ENCODE measurements at regions of chr10 and their contacts with region 1.

Region 1: GRCh38 chr10:73940634-73941221 is 29.8 kb downstream of the PLAU start:
- DNase-seq: peak; percentile 89
- ATAC-seq: peak; percentile 98
- H3K4me3 Mint-ChIP-seq: peak overlapping the region; percentile 33
- H3K27ac Mint-ChIP-seq: no peak overlapping the region
- H3K4me1 Mint-ChIP-seq: peaks cover 10% of the 10 kb centered on the region
- H3K27me3 Mint-ChIP-seq: peaks cover 7% of the 10 kb centered on the region
- CTCF ChIP-seq: peak; percentile 53

Region 2: DNA sequence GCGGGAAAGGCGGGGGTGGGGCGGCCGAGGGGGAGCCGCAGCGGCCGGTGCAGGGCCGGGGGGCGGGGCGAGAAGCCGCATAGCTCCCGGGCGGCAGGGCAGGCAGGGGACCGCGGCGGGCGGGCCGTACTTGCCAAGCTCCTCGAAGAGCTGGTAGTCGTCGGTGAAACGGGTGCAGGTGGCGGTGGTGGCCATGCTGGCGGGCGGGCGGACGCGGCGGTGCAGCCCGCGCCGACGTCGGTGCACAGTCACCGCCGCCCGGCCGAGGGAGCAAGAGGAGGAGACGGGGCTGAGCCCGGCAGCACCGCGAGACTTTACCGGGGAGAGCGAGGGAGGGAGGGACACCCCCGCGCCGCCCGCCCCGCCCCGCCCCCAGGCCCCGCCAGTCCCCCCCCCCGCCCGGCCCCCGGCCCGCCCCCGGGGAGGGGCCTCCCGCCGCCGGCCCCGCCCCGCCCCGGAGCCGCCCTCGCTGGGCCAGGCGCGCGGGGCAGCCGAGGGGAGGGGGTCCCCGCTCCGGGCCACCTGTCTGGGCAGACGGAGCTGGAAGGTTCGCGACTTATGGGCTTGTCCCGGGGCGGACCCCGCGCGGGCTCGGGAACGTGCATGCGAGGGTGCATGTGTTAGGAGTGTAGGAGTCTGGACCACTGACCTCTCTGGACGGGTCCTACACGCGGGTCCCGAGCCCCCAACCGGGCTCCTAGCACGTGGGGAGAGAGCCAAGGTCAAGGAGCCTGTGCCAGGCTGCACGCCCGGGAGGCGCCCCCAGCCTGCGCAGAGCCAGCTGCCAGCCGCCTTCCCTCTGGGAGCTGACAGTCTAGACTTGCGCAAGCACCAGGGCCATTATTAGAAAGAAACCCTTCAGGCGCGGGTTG is 66.2 kb before region 1 on chr10 and contains the start of gene CAMK2G:
- CTCF ChIA-PET with region 1: interaction called, 24 read pairs
- POLR2A ChIA-PET with region 1: no interaction called
- DNase-seq: peak; percentile 77
- ATAC-seq: peak; percentile 84
- H3K4me3 Mint-ChIP-seq: peak within 1 kb of the TSS; percentile 74
- H3K27ac Mint-ChIP-seq: no peak within 1 kb of the TSS
- H3K4me1 Mint-ChIP-seq: peaks cover 32% of the 10 kb centered on the region
- H3K27me3 Mint-ChIP-seq: no peaks in the 10 kb centered on the region; the same call in 1 of the 2 replicates
- CTCF ChIP-seq: no peak
- total RNA-seq, gene CAMK2G: 34.9 to 39.9 TPM (median 34.9 TPM) in 3 replicates

Region 3: DNA sequence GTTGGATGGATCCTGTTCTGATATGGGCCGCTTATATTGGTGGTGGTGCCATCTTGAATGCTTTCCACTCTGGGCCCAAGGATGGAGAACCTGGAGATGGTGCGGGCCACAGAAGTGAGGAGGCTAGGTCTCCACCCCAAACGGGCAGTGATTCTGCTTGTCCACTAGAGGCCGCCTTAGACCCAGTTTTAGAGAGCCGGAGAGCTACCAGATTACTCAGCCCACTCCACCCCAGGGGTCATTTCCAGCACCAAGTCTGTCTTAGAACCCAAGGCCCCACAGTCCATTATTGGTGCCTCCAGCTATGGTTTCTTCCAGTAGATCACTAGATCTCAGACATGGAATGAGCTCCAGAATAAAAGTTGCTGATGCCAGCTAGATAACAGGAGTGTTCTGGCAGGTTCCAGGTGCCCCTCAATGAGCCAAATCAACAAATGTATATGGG is 54.6 kb before region 1 on chr10:
- CTCF ChIA-PET with region 1: interaction called, 155 read pairs
- POLR2A ChIA-PET with region 1: interaction called, 7 read pairs
- DNase-seq: peak; percentile 78
- ATAC-seq: peak; percentile 95
- H3K4me3 Mint-ChIP-seq: no peak overlapping the region
- H3K27ac Mint-ChIP-seq: no peak overlapping the region
- H3K4me1 Mint-ChIP-seq: peaks cover 19% of the 10 kb centered on the region
- H3K27me3 Mint-ChIP-seq: no peaks in the 10 kb centered on the region
- CTCF ChIP-seq: peak; percentile 79

Region 4: GRCh38 chr10:73917566-73918305 is 23.0 kb before region 1 on chr10:
- CTCF ChIA-PET with region 1: interaction called, 10 read pairs
- POLR2A ChIA-PET with region 1: no interaction called
- DNase-seq: no peak
- ATAC-seq: no peak
- H3K4me3 Mint-ChIP-seq: no peak overlapping the region
- H3K27ac Mint-ChIP-seq: no peak overlapping the region
- H3K4me1 Mint-ChIP-seq: peaks cover 22% of the 10 kb centered on the region
- H3K27me3 Mint-ChIP-seq: peaks cover 15% of the 10 kb centered on the region
- CTCF ChIP-seq: no peak

Region 5: DNA sequence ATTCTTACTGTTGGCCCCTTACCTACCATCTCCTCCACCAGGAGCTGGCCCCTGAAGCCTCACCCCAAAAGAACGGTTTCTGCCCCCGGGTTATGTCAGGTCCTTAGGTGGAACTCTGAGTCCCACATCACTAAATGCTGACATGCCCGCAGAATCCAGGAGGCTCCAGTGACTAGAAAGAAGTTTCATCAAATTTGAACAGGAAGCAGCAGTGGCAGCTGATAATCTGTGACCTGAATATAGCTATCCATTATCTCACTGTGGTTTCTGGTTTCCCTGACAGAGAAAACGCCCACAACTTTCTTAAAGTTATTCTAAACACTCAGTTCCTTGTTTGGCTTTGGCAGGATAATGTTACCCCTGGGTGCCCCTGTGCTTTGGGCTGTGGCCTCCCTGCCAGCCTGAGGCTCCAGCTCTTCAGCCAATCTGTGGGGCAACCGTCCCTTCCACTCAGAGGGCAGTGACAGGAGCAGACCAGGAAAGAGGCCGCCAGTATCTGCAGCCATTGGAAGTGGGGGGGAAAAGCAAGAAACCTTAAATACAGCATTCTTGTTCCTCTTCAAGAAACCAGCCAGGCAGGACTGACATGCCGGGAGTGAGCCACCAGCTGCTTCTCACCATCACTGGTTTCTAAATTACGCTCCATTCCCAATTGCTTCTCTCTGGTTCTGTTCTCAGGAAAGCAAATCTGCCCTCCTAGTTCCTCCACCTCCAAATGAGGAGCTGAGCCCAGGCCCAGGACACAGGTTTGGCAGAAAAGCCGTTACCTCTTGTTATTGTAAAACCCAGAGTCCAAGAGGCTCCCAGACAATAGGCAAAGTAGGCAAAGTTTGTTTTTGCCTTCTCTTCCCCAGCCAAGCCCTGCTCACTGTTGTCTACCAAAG is 16.0 kb after region 1 on chr10:
- CTCF ChIA-PET with region 1: interaction called, 15 read pairs
- POLR2A ChIA-PET with region 1: no interaction called
- DNase-seq: no peak
- ATAC-seq: peak; percentile 43
- H3K4me3 Mint-ChIP-seq: no peak overlapping the region
- H3K27ac Mint-ChIP-seq: no peak overlapping the region; the same call in 1 of the 2 replicates
- H3K4me1 Mint-ChIP-seq: peaks cover 10% of the 10 kb centered on the region
- H3K27me3 Mint-ChIP-seq: no peaks in the 10 kb centered on the region
- CTCF ChIP-seq: no peak

Region 6: DNA sequence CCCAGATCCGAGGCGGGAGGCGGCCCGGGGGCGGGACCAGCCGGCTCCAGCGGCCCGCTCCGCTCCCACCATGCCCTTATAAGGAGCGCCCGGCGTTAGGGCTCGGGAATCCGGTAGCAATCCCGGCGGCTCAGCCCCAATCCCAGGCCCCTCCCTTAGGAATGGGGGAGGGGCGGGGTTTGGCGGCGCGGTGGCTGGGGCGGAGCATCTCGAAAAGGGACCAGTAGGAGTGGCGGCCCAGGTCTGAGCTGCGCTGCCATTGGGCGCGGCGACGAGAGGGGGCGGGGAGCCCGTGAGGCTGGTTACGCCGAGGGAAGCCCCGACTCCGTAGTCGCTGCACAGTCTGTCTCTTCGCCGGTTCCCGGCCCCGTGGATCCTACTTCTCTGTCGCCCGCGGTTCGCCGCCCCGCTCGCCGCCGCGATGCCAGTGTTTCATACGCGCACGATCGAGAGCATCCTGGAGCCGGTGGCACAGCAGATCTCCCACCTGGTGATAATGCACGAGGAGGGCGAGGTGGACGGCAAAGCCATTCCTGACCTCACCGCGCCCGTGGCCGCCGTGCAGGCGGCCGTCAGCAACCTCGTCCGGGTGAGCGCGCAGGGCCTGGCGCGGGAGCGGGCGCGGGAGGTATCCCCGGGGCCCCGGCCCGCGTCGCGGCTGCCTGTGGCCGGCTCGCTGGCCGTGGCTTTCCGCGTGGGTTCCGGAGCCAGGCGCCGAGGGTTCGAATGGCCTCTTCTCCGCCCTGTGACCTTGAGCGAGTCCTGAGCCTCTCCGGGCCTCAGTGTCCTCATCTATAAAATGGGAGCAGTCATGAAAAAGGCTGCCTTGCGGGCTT is 57.3 kb after region 1 on chr10 and contains the start of gene VCL:
- CTCF ChIA-PET with region 1: interaction called, 10 read pairs
- POLR2A ChIA-PET with region 1: no interaction called
- DNase-seq: peak; percentile 99
- ATAC-seq: peak; percentile 93
- H3K4me3 Mint-ChIP-seq: peak within 1 kb of the TSS; percentile 98
- H3K27ac Mint-ChIP-seq: peak within 1 kb of the TSS; percentile 100
- H3K4me1 Mint-ChIP-seq: peaks cover 41% of the 10 kb centered on the region
- H3K27me3 Mint-ChIP-seq: peaks cover 2% of the 10 kb centered on the region; the same call in 1 of the 2 replicates
- CTCF ChIP-seq: no peak
- total RNA-seq, gene VCL: 225 to 236 TPM (median 234 TPM) in 3 replicates

Measured in WTC11 (cell line).